IMR-90 (cell line): ENCODE measurements at regions of chr19 and their contacts with region 1.

Region 1: GRCh38 chr19:8233370-8233769 is 24.2 kb downstream of the CERS4 start:
- DNase-seq: peak; percentile 53
- ATAC-seq: peak; percentile 83
- H3K4me3 ChIP-seq: no peak overlapping the region
- H3K27ac ChIP-seq: no peak overlapping the region
- H3K4me1 ChIP-seq: peaks cover 2% of the 10 kb centered on the region; the same call in 1 of the 2 replicates
- H3K27me3 ChIP-seq: no peaks in the 10 kb centered on the region
- CTCF ChIP-seq: no peak
- POLR2A ChIP-seq: no peak
- RAD21 ChIP-seq: no peak

Region 2: DNA sequence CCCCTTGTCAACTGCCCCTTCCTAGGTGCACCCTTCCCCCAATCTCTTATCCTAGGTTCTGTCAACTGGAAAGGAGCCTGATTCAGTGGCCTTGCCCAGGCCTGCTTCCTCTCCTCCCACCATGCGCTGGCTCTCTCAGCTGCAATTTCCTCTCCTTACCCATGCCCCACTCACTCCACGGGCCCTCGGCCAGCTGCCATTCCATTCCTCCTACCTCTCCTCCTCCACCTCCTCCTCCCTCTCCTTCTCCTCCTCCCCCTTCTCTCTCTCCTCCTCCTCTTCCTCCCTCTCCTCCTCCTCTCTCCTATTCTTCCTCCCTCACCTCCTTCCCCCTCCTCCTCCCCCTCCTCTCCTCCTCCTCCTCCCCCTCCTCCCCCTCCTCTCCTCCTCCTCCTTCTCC is 280.3 kb before region 1 on chr19:
- CTCF ChIA-PET with region 1: no interaction called
- POLR2A ChIA-PET with region 1: interaction called, 10 read pairs
- dilution Hi-C with region 1: no loop called
- in situ Hi-C with region 1: no loop called
- intact Hi-C with region 1: no loop called
- DNase-seq: peak; percentile 21
- ATAC-seq: peak; percentile 81
- H3K4me3 ChIP-seq: no peak overlapping the region
- H3K27ac ChIP-seq: no peak overlapping the region
- H3K4me1 ChIP-seq: no peaks in the 10 kb centered on the region; the same call in 1 of the 2 replicates
- H3K27me3 ChIP-seq: no peaks in the 10 kb centered on the region
- CTCF ChIP-seq: no peak
- POLR2A ChIP-seq: no peak
- RAD21 ChIP-seq: no peak

Region 3: DNA sequence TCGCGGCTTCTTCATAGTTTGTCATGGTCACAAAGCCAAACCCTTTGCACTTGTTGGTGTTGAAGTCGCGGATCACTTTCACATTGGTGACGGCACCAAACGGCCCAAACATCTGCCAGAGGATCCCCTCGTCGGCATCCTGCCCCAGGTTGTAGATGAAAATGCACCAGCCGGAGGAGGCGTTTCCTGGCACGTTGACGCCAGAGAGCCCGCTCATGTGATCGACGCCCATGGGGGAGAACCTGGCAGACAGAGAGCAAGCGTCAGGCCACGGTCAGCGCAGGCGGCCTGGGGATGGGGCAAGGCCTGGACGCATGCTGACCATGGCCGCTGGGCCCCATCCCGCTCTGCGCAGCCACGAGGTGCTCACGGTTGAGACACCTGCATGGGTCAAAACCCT is 269.8 kb before region 1 on chr19:
- CTCF ChIA-PET with region 1: no interaction called
- POLR2A ChIA-PET with region 1: no interaction called
- dilution Hi-C with region 1: no loop called
- in situ Hi-C with region 1: no loop called
- intact Hi-C with region 1: no loop called
- DNase-seq: no peak
- ATAC-seq: no peak
- H3K4me3 ChIP-seq: no peak overlapping the region
- H3K27ac ChIP-seq: no peak overlapping the region
- H3K4me1 ChIP-seq: no peaks in the 10 kb centered on the region
- H3K27me3 ChIP-seq: no peaks in the 10 kb centered on the region
- CTCF ChIP-seq: no peak
- POLR2A ChIP-seq: no peak
- RAD21 ChIP-seq: no peak

Region 4: DNA sequence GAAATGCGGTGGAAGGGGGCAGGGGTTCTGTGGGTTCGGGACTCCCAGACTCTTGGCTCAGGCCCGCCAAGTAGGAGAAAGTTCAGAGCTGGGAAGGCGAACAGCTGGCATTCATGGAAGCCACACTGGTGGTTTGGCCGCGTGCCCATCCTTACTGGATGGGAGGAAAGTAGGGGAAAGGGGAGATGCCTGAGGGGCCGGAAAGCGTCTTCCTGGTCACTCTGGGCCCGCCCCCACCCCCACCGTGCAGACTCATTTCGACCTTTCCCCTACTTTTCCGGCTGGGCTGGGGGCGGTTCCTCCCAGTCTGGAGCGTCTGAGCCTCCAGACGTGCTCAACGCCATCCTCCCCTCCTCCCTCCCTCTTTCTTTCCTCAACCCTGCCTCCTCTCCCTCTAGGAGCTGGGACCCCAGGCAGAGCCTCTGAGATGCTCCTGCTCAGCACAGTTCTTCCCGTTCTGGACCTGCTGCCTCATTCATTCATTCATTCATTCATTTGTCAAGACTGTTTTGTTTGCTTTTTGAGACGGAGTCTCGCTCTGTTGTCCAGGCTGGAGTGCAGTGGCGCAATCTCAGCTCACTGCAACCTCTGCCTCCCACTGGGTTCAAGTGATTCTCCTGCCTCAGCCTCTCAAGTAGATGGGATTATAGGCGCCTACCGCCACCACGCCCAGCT is 134.1 kb after region 1 on chr19:
- CTCF ChIA-PET with region 1: no interaction called
- POLR2A ChIA-PET with region 1: no interaction called
- dilution Hi-C with region 1: no loop called
- in situ Hi-C with region 1: no loop called
- intact Hi-C with region 1: no loop called
- DNase-seq: peak; percentile 98
- ATAC-seq: peak; percentile 82
- H3K4me3 ChIP-seq: no peak overlapping the region
- H3K27ac ChIP-seq: peak overlapping the region; percentile 57; the same call in 1 of the 2 replicates
- H3K4me1 ChIP-seq: peaks cover 26% of the 10 kb centered on the region
- H3K27me3 ChIP-seq: no peaks in the 10 kb centered on the region
- CTCF ChIP-seq: no peak
- POLR2A ChIP-seq: no peak
- RAD21 ChIP-seq: peak; percentile 33

Region 5: GRCh38 chr19:8430650-8431049 is 197.3 kb after region 1 on chr19:
- CTCF ChIA-PET with region 1: no interaction called
- POLR2A ChIA-PET with region 1: no interaction called
- dilution Hi-C with region 1: no loop called
- in situ Hi-C with region 1: no loop called
- intact Hi-C with region 1: no loop called
- DNase-seq: no peak
- ATAC-seq: no peak
- H3K4me3 ChIP-seq: no peak overlapping the region
- H3K27ac ChIP-seq: no peak overlapping the region
- H3K4me1 ChIP-seq: no peaks in the 10 kb centered on the region
- H3K27me3 ChIP-seq: no peaks in the 10 kb centered on the region
- CTCF ChIP-seq: no peak
- POLR2A ChIP-seq: no peak
- RAD21 ChIP-seq: no peak